CD4-positive, alpha-beta T cell (primary cell): ENCODE measurements at regions of chr19 and their contacts with region 1.

Region 1: DNA sequence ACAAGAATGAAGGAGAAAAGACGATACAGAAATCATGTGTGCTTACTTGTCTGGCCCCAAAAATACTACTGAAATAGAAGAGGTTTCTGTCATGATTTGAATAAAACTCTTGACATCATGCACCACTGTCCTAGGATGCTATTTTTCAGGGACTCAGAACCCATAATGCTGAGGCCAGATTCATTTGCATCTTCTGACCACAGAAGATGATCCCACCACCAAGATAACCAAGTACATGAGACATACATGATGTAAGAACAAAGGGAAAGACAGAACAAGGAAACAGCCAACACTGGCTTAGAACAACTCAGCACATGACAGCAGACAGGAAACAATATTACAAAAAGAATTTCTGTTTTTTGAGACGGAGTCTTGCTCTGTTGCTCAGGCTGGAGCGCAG is 2.5 kb downstream of the ZNF552 start:
- DNase-seq: no peak
- ATAC-seq: no peak
- H3K4me3 ChIP-seq: no peak overlapping the region
- H3K4me3 Mint-ChIP-seq: peak overlapping the region; percentile 57
- H3K27ac ChIP-seq: peak overlapping the region in 1 of 2 donors; percentile 27
- H3K27ac Mint-ChIP-seq: peak overlapping the region; percentile 94
- H3K4me1 ChIP-seq: peaks cover 32% of the 10 kb centered on the region
- H3K4me1 Mint-ChIP-seq: peaks cover 54% of the 10 kb centered on the region
- H3K27me3 ChIP-seq: no peaks in the 10 kb centered on the region
- H3K27me3 Mint-ChIP-seq: no peaks in the 10 kb centered on the region
- CTCF ChIP-seq: no peak

Region 2: DNA sequence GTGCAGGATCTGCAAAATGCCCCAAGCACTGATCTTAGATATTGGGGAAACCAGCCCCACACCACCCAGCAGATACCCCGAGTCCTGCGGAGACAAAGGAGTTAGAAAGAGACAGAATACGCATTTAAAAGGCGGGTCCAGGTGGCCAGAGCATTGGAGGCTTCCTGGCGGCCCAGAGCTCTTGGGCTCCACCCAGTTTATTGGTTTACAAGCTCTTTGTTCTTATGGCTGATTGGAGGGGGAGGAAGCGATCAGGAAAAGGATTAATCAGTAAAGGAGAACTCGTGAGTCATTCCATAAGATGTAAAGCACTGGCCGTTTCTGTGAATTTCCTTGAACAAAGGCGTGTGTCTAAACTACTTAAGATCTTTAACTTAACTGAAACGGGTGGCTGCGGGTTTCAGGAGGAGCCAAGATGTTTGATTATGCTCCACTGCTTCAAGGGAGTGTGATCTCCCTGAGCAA is 38.4 kb after region 1 on chr19:
- CTCF ChIA-PET with region 1: no interaction called
- POLR2A ChIA-PET with region 1: interaction called, 13 read pairs
- intact Hi-C with region 1: loop called in 1 of 2 experiments (anchors 1 kb)
- DNase-seq: peak in 1 of 14 experiments; percentile 8
- ATAC-seq: no peak
- H3K4me3 ChIP-seq: peak overlapping the region; percentile 89
- H3K4me3 Mint-ChIP-seq: peak overlapping the region; percentile 96
- H3K27ac ChIP-seq: peak overlapping the region in 1 of 2 donors; percentile 84
- H3K27ac Mint-ChIP-seq: peak overlapping the region; percentile 97
- H3K4me1 ChIP-seq: peaks cover 24% of the 10 kb centered on the region
- H3K4me1 Mint-ChIP-seq: peaks cover 39% of the 10 kb centered on the region
- H3K27me3 ChIP-seq: no peaks in the 10 kb centered on the region
- H3K27me3 Mint-ChIP-seq: no peaks in the 10 kb centered on the region
- CTCF ChIP-seq: no peak